Activated CD4-positive, alpha-beta T cell treated with anti-CD3 and anti-CD28 coated beads for 36 hours (primary cell): ENCODE measurements at regions of chr4 and their contacts with region 1.

Region 1: GRCh38 chr4:168514249-168514852 is 17.5 kb downstream of the PALLD start:
- DNase-seq: no peak
- ATAC-seq: no peak
- H3K4me3 Mint-ChIP-seq: no peak overlapping the region
- H3K27ac Mint-ChIP-seq: no peak overlapping the region
- H3K4me1 Mint-ChIP-seq: peaks cover 33% of the 10 kb centered on the region
- H3K27me3 Mint-ChIP-seq: no peaks in the 10 kb centered on the region

Region 2: DNA sequence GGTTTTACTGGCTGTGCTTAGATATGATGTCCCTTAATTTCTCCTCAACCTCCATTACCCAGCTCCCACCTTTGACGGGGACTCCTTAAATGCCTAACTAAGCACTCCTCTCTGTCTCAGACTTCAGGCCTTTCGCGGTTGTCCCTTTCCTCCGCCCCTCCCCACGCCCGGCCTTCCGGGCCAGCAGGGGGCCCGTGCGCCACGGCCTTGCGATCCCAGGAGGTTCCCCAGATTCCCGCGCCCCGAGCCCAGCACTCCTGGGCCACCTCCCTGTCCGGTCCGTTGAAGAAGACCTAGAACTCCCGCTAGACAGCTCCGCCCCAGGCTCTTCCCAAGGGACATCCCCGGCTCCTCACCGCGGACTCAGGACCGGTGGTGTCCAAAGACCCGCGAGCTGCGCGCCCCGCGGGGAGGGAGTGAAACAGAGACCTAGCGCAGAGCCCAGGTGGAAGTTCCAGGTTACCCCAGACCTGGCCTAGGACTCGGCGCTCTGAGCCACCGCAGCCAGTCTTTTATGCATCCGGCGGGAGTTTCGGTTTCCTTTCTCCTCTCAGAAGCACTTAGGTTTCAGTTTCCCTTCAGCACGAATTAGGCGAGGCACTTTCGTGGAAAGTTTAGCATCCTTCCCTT is 196.0 kb before region 1 on chr4 and contains the start of gene DDX60:
- CTCF ChIA-PET with region 1: no interaction called
- POLR2A ChIA-PET with region 1: no interaction called
- intact Hi-C with region 1: loop called in 1 of 2 experiments (anchors 1 kb)
- DNase-seq: peak; percentile 91
- ATAC-seq: peak; percentile 93
- H3K4me3 Mint-ChIP-seq: peak within 1 kb of the TSS; percentile 85
- H3K27ac Mint-ChIP-seq: peak within 1 kb of the TSS; percentile 92
- H3K4me1 Mint-ChIP-seq: peaks cover 44% of the 10 kb centered on the region
- H3K27me3 Mint-ChIP-seq: no peaks in the 10 kb centered on the region
- total RNA-seq, gene DDX60: 22.2 to 23.8 TPM

Region 3: DNA sequence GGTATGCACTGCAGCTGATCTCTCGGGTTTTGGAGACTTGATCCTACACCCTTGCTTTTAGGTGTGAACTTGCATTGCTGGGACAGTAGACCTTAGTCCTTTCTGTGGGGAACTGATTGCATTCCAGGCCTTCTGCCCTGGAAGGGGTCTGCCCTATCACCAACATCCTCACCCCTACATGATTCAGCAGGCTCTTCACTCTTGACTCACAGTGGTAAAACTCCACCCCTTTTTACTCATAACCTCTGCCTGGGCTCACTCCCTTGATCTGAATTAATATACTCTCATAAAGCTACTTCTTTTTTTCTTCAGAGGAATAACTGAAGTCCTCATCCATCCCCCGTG is 27.4 kb before region 1 on chr4:
- CTCF ChIA-PET with region 1: no interaction called
- POLR2A ChIA-PET with region 1: no interaction called
- intact Hi-C with region 1: loop called in 1 of 2 experiments (anchors 1 kb)
- DNase-seq: peak; percentile 37
- ATAC-seq: peak; percentile 99
- H3K4me3 Mint-ChIP-seq: no peak overlapping the region
- H3K27ac Mint-ChIP-seq: peak overlapping the region; percentile 39
- H3K4me1 Mint-ChIP-seq: peaks cover 36% of the 10 kb centered on the region
- H3K27me3 Mint-ChIP-seq: no peaks in the 10 kb centered on the region

Region 4: GRCh38 chr4:168585168-168586091 is 71.1 kb after region 1 on chr4:
- CTCF ChIA-PET with region 1: interaction called, 7 read pairs
- POLR2A ChIA-PET with region 1: interaction called, 11 read pairs
- intact Hi-C with region 1: no loop called
- DNase-seq: peak; percentile 61
- ATAC-seq: peak; percentile 77
- H3K4me3 Mint-ChIP-seq: no peak overlapping the region
- H3K27ac Mint-ChIP-seq: no peak overlapping the region
- H3K4me1 Mint-ChIP-seq: peaks cover 6% of the 10 kb centered on the region
- H3K27me3 Mint-ChIP-seq: peaks cover 19% of the 10 kb centered on the region

Region 5: DNA sequence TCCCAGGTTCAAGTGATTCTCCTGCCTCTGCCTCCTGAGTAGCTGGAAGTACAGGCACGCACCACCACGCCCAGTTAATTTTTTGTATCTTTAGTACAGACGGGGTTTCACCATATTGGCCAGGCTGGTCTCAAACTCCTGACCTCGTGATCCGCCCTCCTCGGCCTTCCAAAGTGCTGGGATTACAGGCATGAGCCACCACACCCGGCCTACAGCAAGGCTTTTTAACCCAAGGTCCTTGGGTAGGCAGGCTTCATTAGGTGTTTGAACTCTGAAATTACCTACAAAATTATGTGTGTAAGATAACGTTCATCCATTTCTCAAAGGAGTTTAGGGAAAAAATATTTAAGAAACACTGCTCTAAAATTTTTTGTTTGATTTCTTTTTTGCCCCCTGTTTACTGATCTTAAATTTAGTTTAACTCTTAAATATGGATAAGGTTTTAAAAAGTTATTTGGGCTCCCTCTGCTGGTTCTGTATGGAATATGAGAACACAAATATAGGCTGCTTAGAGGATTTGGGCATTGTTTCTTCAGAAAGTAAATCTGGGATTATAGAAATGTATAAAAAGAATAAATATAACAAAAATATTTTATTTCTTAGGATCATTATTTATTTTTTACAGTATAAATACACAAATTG is 402.9 kb after region 1 on chr4:
- CTCF ChIA-PET with region 1: interaction called, 4 read pairs
- POLR2A ChIA-PET with region 1: no interaction called
- intact Hi-C with region 1: loop called (anchors 1 kb)
- DNase-seq: no peak
- ATAC-seq: no peak
- H3K4me3 Mint-ChIP-seq: no peak overlapping the region
- H3K27ac Mint-ChIP-seq: no peak overlapping the region
- H3K4me1 Mint-ChIP-seq: no peaks in the 10 kb centered on the region
- H3K27me3 Mint-ChIP-seq: no peaks in the 10 kb centered on the region

Region 6: GRCh38 chr4:169619959-169620879 is 1105.9 kb after region 1 on chr4 and contains the start of gene CLCN3:
- CTCF ChIA-PET with region 1: no interaction called
- POLR2A ChIA-PET with region 1: no interaction called
- intact Hi-C with region 1: loop called in 1 of 2 experiments (anchors 5 kb)
- DNase-seq: peak; percentile 93
- ATAC-seq: peak; percentile 72
- H3K4me3 Mint-ChIP-seq: peak within 1 kb of the TSS; percentile 93
- H3K27ac Mint-ChIP-seq: peak within 1 kb of the TSS; percentile 100
- H3K4me1 Mint-ChIP-seq: peaks cover 56% of the 10 kb centered on the region
- H3K27me3 Mint-ChIP-seq: no peaks in the 10 kb centered on the region
- total RNA-seq, gene CLCN3: 21.2 to 22.0 TPM